ENCODE measurements at regions of chr10 and their contacts with region 1.

Region 1: DNA sequence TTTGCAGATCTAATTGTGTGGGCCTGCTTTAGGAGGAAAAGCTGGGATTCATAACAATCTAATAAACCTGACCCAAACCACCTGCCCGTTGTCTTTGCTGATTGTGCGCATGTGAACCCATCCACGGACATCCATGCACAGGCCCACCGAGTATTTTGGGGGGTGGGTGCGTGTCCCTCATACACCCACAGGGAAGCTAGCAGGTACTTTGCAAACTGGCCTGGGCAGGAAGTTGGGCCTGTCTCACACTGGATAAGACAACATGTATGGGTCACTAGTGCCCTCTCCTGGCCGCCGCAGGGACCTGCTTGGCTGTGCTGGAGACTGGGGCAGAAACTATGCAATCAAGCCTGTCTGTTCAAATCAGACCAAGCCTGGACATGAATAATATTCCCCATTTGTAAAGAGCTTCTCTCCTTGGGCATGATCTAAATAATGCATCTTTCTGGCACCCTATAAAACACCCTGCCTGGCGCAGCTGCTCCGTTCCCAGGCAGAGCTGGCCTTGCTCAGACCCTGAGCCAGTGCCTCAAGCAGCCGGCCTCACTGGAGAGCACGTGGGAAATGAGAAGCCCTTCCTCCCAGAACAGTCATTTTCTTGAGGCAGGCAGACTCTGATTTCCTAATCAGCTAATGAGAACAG is 15.8 kb downstream of the ECHDC3 start:
- DNase-seq: peak; percentile 90
- H3K4me3 Mint-ChIP-seq: no peak overlapping the region
- H3K27ac Mint-ChIP-seq: no peak overlapping the region
- H3K4me1 Mint-ChIP-seq: peaks cover 1% of the 10 kb centered on the region
- H3K27me3 Mint-ChIP-seq: no peaks in the 10 kb centered on the region

Region 2: DNA sequence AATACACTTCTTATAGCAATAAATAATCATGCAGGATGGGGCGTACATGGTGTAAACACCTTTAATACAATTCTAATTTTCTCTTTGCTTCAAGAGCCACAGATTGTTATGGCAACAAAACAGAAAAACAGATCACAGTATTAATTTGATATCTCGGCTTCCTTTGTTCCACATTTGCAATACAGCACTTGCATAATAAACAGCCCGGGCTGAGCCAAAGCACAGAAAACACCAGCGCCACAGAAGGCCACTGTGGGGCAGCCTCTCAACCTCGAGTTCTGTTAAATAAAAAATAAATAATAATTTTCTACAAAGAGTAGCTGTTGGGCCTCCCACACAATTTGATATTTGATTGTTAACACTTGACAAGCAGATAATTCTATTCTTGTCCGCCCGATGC is 402.4 kb before region 1 on chr10:
- CTCF ChIA-PET with region 1: no interaction called
- POLR2A ChIA-PET with region 1: no interaction called
- intact Hi-C with region 1: no loop called
- DNase-seq: no peak
- H3K4me3 Mint-ChIP-seq: no peak overlapping the region
- H3K27ac Mint-ChIP-seq: no peak overlapping the region
- H3K4me1 Mint-ChIP-seq: peaks cover 10% of the 10 kb centered on the region
- H3K27me3 Mint-ChIP-seq: no peaks in the 10 kb centered on the region

Region 3: DNA sequence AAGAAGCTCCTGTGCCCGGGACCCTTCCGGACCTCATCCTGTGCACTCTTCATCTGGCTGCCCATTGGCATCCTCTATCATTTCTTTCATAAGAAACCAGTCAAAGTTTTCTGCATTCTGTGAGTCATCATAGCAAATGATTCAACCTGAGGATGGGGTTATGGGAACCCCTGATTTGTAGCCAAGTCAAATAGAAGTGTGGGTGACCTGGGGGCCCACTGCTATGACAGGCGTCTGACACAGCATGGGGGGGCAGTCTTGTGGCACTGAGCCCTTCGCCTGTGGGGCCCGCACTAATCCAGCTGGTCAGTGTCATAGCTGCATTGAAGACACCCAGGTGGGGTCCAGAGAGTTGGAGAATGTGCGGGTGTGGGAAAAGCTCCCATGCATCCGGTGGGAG is 376.9 kb before region 1 on chr10:
- CTCF ChIA-PET with region 1: no interaction called
- POLR2A ChIA-PET with region 1: no interaction called
- intact Hi-C with region 1: no loop called
- DNase-seq: peak; percentile 51
- H3K4me3 Mint-ChIP-seq: no peak overlapping the region
- H3K27ac Mint-ChIP-seq: no peak overlapping the region
- H3K4me1 Mint-ChIP-seq: peaks cover 10% of the 10 kb centered on the region
- H3K27me3 Mint-ChIP-seq: no peaks in the 10 kb centered on the region

Region 4: DNA sequence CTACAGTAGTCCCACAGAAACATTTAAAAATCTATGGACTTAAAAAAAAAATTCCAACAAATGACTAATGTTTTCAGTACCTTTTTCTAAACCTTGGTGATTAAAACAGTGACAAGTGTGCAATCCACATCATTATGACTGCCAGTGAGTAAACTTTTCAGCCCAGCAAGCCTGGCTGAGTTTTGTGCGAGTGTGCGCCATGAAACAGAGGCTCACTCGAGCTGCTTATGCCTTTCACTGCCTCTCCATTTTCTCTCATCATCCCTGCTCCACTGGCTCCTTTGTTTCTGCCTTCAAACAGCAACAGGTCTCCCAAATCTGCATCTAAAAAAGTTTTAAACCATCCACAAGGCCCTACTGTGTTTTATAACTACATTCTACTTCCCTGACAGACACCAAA is 252.3 kb before region 1 on chr10:
- CTCF ChIA-PET with region 1: interaction called, 22 read pairs
- POLR2A ChIA-PET with region 1: no interaction called
- intact Hi-C with region 1: no loop called
- DNase-seq: peak; percentile 63
- H3K4me3 Mint-ChIP-seq: no peak overlapping the region
- H3K27ac Mint-ChIP-seq: peak overlapping the region; percentile 16
- H3K4me1 Mint-ChIP-seq: peaks cover 15% of the 10 kb centered on the region
- H3K27me3 Mint-ChIP-seq: no peaks in the 10 kb centered on the region

Region 5: DNA sequence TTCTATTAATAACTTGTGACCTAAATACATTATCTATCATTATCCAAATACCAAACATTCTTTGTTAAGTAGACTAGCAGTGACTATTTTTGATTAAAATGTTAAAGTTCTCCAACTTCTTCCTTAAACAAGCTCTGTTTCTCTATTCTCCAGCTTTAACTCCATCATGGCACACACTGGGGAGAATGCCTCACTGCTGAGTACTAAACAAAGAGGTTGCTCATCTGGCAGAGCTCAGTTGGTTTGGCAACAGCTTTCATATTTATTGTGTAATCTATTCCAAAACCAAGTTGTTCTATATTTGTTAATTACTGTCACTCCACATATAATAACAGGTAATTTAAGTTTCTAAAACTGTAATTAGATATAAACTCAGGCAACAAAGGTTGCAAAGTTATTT is 236.1 kb before region 1 on chr10:
- CTCF ChIA-PET with region 1: interaction called, 43 read pairs
- POLR2A ChIA-PET with region 1: no interaction called
- intact Hi-C with region 1: no loop called
- DNase-seq: no peak
- H3K4me3 Mint-ChIP-seq: no peak overlapping the region
- H3K27ac Mint-ChIP-seq: no peak overlapping the region
- H3K4me1 Mint-ChIP-seq: peaks cover 7% of the 10 kb centered on the region
- H3K27me3 Mint-ChIP-seq: no peaks in the 10 kb centered on the region